GM12878 (cell line): ENCODE measurements at regions of chr12 and their contacts with region 1.

Region 1: DNA sequence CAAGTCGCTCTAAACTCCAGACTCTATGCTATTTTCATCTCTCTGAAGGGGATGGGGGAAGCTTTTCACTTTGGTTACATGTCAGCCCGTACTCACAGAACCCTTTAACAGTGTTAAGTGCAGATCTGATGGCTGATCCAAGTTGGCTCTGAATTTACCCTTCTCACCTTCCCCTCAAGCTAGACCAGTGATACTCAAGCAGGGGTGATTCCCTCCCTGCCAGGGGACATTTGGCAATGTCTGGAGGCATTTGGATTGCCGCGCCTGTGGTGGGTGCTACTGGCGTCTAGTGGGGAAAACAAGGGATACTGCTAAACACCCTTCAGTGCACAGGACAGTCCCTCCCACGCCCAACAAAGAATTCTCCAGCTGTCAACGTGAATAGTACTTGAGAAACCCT is 6.0 kb upstream of the TEX52 start:
- DNase-seq: no peak
- ATAC-seq: no peak
- H3K4me3 ChIP-seq: no peak overlapping the region
- H3K27ac ChIP-seq: no peak overlapping the region
- H3K4me1 ChIP-seq: no peaks in the 10 kb centered on the region
- H3K27me3 ChIP-seq: no peaks in the 10 kb centered on the region
- CTCF ChIP-seq: no peak
- EP300 ChIP-seq: no peak
- POLR2A ChIP-seq: no peak
- RAD21 ChIP-seq: no peak

Region 2: DNA sequence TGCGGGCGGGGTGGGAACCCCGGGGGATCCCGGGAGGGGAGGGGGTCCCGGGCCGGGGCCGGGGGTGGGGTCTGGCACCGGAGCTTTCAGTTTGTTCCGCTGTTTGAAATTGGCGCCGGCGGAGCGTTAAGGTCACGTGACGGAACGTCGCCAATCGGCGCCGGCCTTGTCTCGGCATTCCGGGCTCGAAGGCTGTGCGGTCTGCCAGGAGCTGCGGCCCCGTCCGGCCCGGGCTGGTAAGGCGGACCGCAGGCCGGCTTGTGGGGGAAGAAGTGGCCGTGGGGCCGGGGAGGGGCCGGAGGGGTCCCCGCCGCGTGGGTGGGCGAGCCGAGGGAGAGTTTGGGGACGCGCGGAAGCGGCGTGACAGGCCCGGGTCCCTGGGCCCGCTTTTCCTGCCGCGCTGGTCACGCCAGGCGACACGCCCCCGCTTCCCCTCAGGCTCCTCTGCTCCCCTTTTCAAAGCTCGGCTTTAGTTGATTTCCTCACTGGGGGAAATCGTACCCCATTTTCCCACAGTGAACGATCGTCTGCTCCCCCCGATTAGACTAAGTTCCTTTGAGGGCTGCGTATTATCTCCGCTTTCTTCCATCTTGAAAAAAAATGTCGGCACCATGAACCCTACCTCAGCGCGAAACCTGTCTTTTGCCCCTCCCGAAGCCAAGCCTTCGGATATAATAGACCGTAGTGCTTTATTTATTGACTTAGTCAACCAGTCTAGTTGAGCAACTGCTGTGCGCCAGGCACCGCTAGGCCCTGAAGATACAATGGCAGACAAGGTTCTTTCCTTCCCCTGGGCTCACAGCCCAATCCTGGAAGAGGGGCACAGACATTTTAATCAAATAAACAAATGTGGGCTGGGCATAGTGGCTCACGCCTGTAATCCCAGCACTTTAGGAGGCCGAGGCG is 14.4 kb after region 1 on chr12 and contains the starts of genes FOXM1 and RHNO1:
- CTCF ChIA-PET with region 1: interaction called, 13 read pairs
- POLR2A ChIA-PET with region 1: interaction called, 5 read pairs
- RAD21 ChIA-PET with region 1: no interaction called
- SMC1A ChIA-PET with region 1: interaction called, 3 read pairs
- in situ Hi-C with region 1: no loop called
- intact Hi-C with region 1: no loop called
- DNase-seq: no peak
- ATAC-seq: peak; percentile 86
- H3K4me3 ChIP-seq: peak within 1 kb of the TSS; percentile 93
- H3K27ac ChIP-seq: peak within 1 kb of the TSS; percentile 98
- H3K4me1 ChIP-seq: peaks cover 11% of the 10 kb centered on the region
- H3K27me3 ChIP-seq: no peaks in the 10 kb centered on the region
- CTCF ChIP-seq: peak in 1 of 3 experiments; percentile 2; a peak in 1 of 6 replicates
- EP300 ChIP-seq: no peak
- POLR2A ChIP-seq: peak; percentile 92
- RAD21 ChIP-seq: no peak
- polyA plus RNA-seq, gene FOXM1: 15.1 to 15.5 TPM
- polyA plus RNA-seq, gene RHNO1: 27.9 to 29.1 TPM

Region 3: DNA sequence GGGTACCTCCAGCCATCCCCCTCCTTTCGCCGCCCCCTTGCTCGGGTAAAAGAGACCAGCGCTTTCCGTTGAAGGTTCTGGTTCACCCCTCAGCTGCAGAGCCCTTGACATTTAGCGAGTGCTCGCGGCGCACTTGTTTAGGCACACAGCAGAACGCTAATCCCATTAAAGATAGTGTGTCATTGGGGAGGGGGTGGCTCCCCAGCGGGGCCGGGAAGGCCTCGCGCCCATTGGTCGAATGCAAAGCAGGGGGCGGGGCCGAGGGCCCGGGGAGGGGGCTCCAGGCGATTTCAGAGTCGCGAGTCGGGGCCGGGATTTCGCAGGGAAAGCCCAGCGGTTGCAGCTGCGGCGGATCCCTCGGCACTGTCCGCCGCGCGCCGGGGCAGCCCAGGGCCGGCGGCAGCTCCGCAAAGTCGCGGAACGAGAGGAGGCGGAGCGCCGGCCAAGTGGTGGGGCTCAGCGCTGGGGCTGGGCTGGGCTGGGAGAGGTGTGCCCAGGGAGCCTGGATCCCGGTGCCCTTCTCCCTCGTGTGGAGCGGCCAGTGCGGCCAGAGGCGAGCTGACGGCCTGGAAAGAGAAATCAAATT is 337.2 kb after region 1 on chr12:
- CTCF ChIA-PET with region 1: no interaction called
- POLR2A ChIA-PET with region 1: no interaction called
- RAD21 ChIA-PET with region 1: no interaction called
- SMC1A ChIA-PET with region 1: no interaction called
- in situ Hi-C with region 1: no loop called
- intact Hi-C with region 1: no loop called
- DNase-seq: no peak
- ATAC-seq: no peak; the same call in 2 of the 3 replicates
- H3K4me3 ChIP-seq: no peak overlapping the region
- H3K27ac ChIP-seq: no peak overlapping the region
- H3K4me1 ChIP-seq: no peaks in the 10 kb centered on the region
- H3K27me3 ChIP-seq: peaks cover 11 to 17% of the 10 kb centered on the region in 2 experiments
- CTCF ChIP-seq: no peak
- EP300 ChIP-seq: no peak
- POLR2A ChIP-seq: no peak
- RAD21 ChIP-seq: no peak